ENCODE measurements at regions of chr16 and their contacts with region 1.

Region 1: DNA sequence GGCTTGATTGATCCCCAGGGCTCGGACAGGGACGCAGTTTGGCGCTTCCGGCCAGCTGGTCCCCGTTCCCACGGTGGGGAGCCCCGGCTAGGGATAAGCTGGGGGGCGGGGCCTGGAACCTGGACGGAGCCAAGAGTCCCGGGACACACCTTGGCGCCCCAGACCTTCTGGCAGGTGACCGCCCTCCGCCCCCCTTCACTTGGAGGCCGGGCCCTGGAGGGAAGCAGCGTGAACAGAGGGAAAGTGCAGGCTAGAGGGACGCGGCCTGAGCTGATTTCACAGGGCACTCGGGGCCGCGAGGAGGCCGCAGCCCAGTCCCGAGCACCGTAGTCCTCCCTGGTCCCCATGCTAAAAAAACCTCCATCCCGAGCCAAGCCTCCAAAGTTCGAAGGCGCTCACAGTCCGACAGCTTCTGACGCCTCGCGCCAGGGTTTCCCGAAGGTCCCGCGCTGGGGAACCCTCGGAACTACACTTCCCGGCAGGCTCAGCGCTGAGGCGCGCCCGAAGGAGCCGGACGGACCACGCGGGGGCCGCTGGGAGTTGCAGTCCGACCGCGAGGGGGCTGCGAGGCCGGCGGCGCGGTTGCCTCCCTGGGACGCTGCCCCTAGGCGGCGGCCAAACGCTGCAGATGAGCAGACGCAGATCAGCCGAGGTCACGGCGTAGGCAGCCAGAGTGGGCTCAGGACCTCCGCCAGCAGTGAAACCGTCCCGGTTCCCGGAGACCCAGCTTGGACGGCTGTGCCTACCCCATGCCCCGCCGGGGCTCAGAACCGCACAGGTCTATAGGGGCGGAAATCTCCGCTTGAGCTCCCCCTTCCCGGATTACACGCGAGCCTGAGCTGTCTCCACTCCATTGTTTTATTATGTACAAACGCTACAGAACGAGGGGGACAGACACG is at the start of gene TBX6:
- DNase-seq: peak; percentile 87 to 97 (median 92)
- H3K4me3 ChIP-seq: peak within 1 kb of the TSS; percentile 42 to 81 (median 67)
- H3K27ac ChIP-seq: peak within 1 kb of the TSS; percentile 55 to 100 (median 90)
- H3K27me3 ChIP-seq: no peaks in the 10 kb centered on the region
- CTCF ChIP-seq: peak; percentile 55 to 96 (median 81)
- total RNA-seq, gene TBX6: 0.38 to 5.7 (median 2.2) TPM

Region 2: GRCh38 chr16:30065143-30065850 is 26.4 kb before region 1 on chr16 and contains the start of gene ALDOA:
- intact Hi-C with region 1: loop called (anchors 2 kb)
- DNase-seq: peak; percentile 94 to 99 (median 98)
- H3K4me3 ChIP-seq: peak within 1 kb of the TSS; percentile 67 to 100 (median 96)
- H3K27ac ChIP-seq: peak within 1 kb of the TSS; percentile 91 to 100 (median 100)
- H3K27me3 ChIP-seq: no peaks in the 10 kb centered on the region
- CTCF ChIP-seq: peak in 42 of 56 donors; percentile 5 to 56 (median 32)
- total RNA-seq, gene ALDOA: 996 to 2,428 (median 1,936) TPM

Region 3: DNA sequence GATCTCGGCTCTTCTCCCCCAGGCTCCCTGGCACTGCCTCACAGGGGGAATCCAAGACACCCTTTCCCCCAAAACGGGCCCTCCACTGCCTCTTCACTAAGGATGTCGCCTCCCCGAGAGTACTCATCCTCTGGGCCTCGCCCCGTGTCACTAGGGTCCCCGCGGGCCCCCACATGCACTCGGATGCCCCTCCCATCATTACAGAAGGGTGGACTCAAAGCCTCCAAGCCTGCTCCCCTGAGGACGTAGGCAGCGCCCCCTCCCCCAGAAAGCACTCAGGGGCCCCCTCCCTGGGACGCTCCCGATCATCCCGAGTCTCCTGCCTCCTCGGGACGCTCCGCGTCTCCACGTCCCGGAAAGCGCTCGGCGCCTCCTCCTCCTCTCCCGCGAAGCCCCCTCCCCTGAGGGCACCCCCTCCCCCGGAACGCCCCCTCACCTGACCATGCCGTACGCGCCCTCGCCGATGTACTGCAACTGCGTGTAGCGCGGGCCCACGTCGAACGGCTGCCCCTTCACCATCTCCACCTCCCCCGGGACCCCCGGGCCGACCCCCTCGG is 31.0 kb after region 1 on chr16:
- intact Hi-C with region 1: loop called in 1 of 2 experiments (anchors 2 kb)
- DNase-seq: peak in 1 of 10 donors; percentile 23
- H3K4me3 ChIP-seq: peak overlapping the region; percentile 69 to 96 (median 88)
- H3K27ac ChIP-seq: peak overlapping the region; percentile 90 to 100 (median 97)
- H3K27me3 ChIP-seq: no peaks in the 10 kb centered on the region
- CTCF ChIP-seq: no peak

Region 4: GRCh38 chr16:30183233-30184095 is 91.7 kb after region 1 on chr16 and contains the start of gene CORO1A:
- intact Hi-C with region 1: loop called in 1 of 2 experiments (anchors 5 kb)
- DNase-seq: peak; percentile 70 to 94 (median 90)
- H3K4me3 ChIP-seq: peak within 1 kb of the TSS; percentile 47 to 78 (median 66)
- H3K27ac ChIP-seq: peak within 1 kb of the TSS in 57 of 59 donors; percentile 9 to 91 (median 78)
- H3K27me3 ChIP-seq: no peaks in the 10 kb centered on the region
- CTCF ChIP-seq: peak in 4 of 56 donors; percentile 6 to 27 (median 18)
- total RNA-seq, gene CORO1A: 34.2 to 114 (median 60.7) TPM

Region 5: DNA sequence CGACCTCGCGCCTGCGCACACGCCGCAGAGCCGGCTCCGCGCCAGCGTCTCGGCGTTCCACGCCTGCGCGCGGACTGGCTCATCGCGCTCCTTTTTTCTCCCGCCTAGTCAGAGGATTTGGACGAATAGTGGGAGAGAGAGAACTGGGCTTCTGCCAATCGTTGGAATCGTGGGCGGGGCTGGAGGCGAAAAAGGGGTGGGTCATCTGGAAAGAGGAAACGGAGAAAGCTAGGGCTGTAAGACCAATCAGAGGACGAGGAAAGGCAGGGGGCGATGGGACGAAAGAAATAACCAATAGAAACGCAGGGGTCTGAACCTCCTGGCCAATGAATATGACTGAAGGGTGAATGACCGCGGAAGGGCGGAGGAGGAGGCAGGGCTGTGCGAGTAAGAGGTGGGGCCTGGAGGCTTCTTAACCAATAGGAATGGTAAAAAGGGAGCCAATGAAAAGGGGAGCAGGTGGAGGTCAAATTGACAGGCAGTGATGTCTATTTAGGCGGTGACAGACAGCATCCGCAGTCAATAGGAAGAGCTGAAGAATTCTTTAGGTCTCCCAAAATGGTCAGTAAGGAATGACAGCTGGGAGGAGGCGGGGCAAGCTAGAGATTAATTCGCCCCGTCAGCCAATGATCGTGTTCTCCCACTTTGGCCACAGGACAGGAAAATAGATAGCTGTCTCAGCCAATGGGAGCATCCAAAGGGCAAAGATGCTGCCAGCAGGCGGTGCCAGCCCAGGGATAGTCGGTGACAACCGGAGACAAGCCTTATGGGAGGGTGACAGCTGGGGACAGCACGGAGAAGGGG is 278.9 kb after region 1 on chr16 and contains the start of gene TBC1D10B:
- intact Hi-C with region 1: loop called in 1 of 2 experiments (anchors 10 kb)
- DNase-seq: peak; percentile 96 to 100 (median 100)
- H3K4me3 ChIP-seq: peak within 1 kb of the TSS; percentile 52 to 98 (median 90)
- H3K27ac ChIP-seq: peak within 1 kb of the TSS; percentile 86 to 100 (median 99)
- H3K27me3 ChIP-seq: no peaks in the 10 kb centered on the region
- CTCF ChIP-seq: peak in 44 of 56 donors; percentile 11 to 62 (median 38)
- total RNA-seq, gene TBC1D10B: 50.3 to 87.6 (median 67.1) TPM

Region 6: DNA sequence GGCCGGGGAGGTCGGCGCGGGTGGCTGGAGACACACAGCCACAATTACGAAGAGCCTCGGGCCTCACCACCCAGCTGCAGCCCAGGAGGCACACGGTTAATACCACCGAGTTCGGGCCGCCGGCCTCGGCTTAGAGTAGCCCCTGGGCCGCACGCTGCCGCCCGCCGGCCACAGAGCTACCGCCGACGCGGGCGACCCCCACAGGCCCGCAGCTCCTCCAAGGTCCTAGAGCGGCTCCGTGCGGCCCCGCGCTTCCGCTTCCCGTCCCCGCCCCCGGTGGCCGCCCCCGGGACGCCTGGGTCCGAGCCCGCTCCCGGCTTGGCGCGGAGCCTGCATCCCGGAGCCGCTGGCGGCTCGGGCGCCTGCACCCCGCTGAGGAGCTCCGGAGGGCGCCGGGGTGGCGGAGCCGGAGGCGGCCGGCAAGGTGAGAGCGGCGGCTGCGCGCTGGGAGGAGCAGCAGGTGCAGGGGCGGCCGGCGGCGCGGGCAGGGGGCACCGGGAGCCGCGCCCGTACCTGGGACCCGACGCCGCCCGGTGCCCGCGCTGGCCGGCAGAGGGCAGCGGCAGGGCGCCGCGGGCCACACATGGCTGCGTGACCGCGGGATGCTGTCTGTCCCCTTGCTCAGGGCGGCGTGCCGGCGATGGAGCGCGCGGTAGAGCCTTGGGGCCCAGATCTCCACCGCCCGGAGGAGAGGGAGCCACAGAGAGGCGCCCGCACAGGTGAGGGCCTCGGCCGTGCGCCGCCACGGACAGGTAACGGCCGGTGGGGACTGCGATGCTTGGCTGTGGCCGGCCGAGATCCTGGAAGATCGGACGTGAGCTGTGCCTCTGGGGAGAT is 303.6 kb after region 1 on chr16 and contains the start of gene ZNF48:
- intact Hi-C with region 1: loop called (anchors 10 kb)
- DNase-seq: peak; percentile 78 to 95 (median 91)
- H3K4me3 ChIP-seq: peak within 1 kb of the TSS; percentile 64 to 99 (median 88)
- H3K27ac ChIP-seq: peak within 1 kb of the TSS; percentile 57 to 94 (median 83)
- H3K27me3 ChIP-seq: no peaks in the 10 kb centered on the region
- CTCF ChIP-seq: peak in 43 of 56 donors; percentile 5 to 73 (median 38)
- total RNA-seq, gene ZNF48: 10.1 to 24.9 (median 16.6) TPM

Region 7: GRCh38 chr16:30407102-30407803 is 315.5 kb after region 1 on chr16 and contains the start of gene ZNF771:
- intact Hi-C with region 1: loop called in 1 of 2 experiments (anchors 10 kb)
- DNase-seq: peak; percentile 92 to 97 (median 94)
- H3K4me3 ChIP-seq: peak within 1 kb of the TSS; percentile 59 to 98 (median 83)
- H3K27ac ChIP-seq: peak within 1 kb of the TSS in 58 of 59 donors; percentile 60 to 95 (median 86)
- H3K27me3 ChIP-seq: no peaks in the 10 kb centered on the region
- CTCF ChIP-seq: peak in 32 of 56 donors; percentile 4 to 47 (median 27)
- total RNA-seq, gene ZNF771: 15.2 to 48.7 (median 27.1) TPM

Measured in dorsolateral prefrontal cortex (tissue), 120 donors.